ENCODE measurements at regions of chr17 and their contacts with region 1.

Region 1: GRCh38 chr17:700504-701094 is 14.0 kb downstream of the VPS53 start:
- H3K4me3 ChIP-seq: no peak overlapping the region
- H3K27ac ChIP-seq: no peak overlapping the region
- H3K4me1 ChIP-seq: no peaks in the 10 kb centered on the region
- CTCF ChIP-seq: 0 out of 2 replicates have a peak, but pooled peaks have one; percentile 34

Region 2: DNA sequence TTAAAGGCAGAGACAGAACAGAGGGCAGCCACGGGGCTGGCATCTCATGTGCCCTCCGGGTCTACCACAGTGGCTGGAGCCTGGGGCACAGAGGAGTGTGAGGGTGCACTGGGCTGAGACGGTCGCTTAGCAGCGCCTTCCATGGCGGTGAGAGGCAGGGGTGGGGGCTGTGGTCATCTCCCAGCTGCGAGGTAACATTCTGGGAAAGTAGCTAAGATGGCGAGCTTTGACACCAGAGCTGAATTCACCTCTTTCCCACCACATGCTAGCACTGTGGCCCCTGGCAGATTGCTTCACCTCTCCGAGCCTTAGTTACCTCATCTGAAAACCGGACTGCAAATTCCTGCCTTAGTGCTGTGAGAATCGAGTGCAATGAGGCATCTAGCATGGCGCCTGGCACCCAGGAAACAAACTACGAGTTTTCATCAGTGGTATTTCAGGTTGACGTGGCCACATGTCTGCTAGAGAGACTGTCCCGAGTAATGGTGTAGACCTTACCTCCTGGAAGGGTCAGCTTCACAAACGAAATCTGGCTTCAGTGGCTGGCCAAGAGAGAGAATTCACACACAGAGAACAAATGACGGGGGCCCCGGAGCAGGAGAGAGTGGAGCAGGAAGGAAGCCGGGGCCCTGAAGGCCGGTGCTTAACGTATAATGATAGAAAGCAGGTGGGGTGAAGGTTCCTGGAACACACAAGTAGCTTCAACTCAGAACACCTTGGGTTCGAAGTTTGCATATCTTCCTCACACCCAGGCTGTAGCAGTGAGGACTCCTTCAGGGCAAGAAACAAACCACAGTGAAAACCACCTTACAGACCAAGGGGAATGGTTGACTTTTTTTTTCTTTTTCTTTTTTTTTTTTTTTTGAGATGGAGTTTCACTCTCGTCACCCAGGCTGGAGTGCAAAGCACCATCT is 284.0 kb before region 1 on chr17:
- CTCF ChIA-PET with region 1: interaction called, 173 read pairs
- POLR2A ChIA-PET with region 1: interaction called, 3 read pairs
- H3K4me3 ChIP-seq: no peak overlapping the region
- H3K27ac ChIP-seq: no peak overlapping the region
- H3K4me1 ChIP-seq: no peaks in the 10 kb centered on the region
- CTCF ChIP-seq: no peak

Region 3: GRCh38 chr17:681738-682529 is 18.7 kb before region 1 on chr17:
- CTCF ChIA-PET with region 1: interaction called, 34 read pairs
- POLR2A ChIA-PET with region 1: no interaction called
- H3K4me3 ChIP-seq: no peak overlapping the region
- H3K27ac ChIP-seq: no peak overlapping the region
- H3K4me1 ChIP-seq: no peaks in the 10 kb centered on the region
- CTCF ChIP-seq: no peak

Region 4: DNA sequence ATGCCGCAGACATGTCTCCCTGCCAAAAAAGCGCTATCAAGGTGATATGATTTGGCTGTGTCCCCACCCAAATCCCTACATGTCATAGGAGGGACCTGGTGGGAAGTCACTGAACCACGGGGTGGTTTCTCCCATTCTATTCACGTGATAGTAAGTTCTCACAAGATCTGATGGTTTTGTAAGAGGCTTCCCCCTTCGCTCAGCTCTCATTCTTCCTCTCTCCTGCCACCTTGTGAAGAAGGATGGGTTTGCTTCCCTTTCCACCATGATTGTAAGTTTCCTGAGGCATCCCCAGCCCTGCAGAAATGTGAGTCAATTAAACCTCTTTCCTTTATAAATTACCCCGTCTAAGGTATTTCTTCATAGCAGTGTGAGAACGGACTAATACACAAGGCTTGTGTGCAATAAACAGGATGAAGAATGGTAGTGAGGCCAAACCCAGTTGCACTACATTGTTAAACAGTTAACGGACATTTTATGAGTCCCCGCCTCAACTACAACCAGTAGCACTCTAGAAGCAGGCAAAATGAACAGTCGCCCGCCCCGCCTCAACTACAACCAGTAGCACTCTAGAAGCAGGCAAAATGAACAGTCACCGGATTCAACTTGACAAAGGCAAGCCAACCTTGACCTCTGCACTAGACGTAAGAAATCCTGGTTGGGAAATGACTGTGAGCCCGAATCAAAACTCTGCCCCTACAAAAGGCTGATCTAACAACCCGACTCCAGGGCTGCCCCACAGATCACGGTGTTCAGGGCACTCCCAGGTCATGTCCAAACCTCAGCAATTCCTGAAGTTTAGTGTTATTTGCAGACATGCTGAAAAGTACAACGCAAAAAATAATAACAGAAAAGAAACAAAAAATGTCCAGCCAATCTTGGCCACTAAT is 12.3 kb before region 1 on chr17:
- CTCF ChIA-PET with region 1: interaction called, 35 read pairs
- POLR2A ChIA-PET with region 1: no interaction called
- H3K4me3 ChIP-seq: no peak overlapping the region
- H3K27ac ChIP-seq: no peak overlapping the region
- H3K4me1 ChIP-seq: no peaks in the 10 kb centered on the region
- CTCF ChIP-seq: no peak

Region 5: DNA sequence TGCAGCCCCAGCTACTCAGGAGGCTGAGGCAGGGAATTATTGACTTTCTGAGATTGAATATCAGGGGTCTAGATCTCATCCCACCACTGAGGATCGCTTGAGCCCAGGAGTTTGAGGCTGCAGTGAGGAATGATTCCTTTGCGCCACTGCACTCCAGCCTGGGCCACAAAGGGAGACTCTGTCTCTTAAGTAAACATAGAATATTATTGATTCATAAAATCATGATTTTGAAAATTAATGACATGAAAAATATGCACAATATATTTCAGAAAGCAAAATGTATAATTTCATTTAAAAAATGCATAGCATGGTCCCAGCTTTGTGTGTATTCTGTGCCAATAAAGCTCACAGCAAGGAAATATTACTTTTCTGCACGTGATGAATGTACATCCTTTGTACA is 15.6 kb after region 1 on chr17:
- CTCF ChIA-PET with region 1: interaction called, 55 read pairs
- POLR2A ChIA-PET with region 1: no interaction called
- H3K4me3 ChIP-seq: no peak overlapping the region
- H3K27ac ChIP-seq: no peak overlapping the region
- H3K4me1 ChIP-seq: peaks cover 7% of the 10 kb centered on the region; the same call in 1 of the 2 replicates
- CTCF ChIP-seq: no peak

Measured in HEK293 (cell line).